ENCODE measurements at regions of chr11 and their contacts with region 1.

Region 1: DNA sequence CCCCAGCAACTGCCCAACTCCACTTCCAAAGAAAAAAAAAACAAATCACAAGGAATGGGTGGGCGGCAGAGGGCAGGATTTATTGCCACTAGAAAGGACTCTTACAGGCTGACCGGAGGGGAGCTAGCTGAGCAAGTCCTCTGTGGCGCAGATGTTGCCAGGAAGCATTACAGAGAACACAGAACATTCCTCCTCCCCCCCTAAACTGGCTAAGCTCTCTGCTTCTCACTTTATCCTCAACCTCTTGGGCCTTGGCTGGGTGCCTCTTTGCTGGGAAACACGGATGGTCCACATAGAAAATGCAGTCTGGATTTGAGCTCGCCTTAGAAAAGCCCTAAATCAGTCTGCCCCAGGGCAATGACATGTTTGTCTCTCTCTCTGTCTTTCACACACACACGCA is 12.5 kb upstream of the FJX1 start:
- DNase-seq: no peak
- H3K4me3 ChIP-seq: no peak overlapping the region
- H3K4me3 Mint-ChIP-seq: no peak overlapping the region
- H3K27ac ChIP-seq: no peak overlapping the region
- H3K27ac Mint-ChIP-seq: no peak overlapping the region
- H3K4me1 ChIP-seq: no peaks in the 10 kb centered on the region
- H3K4me1 Mint-ChIP-seq: no peaks in the 10 kb centered on the region
- H3K27me3 ChIP-seq: no peaks in the 10 kb centered on the region
- H3K27me3 Mint-ChIP-seq: peaks cover 11 to 71% of the 10 kb centered on the region in 2 donors

Region 2: DNA sequence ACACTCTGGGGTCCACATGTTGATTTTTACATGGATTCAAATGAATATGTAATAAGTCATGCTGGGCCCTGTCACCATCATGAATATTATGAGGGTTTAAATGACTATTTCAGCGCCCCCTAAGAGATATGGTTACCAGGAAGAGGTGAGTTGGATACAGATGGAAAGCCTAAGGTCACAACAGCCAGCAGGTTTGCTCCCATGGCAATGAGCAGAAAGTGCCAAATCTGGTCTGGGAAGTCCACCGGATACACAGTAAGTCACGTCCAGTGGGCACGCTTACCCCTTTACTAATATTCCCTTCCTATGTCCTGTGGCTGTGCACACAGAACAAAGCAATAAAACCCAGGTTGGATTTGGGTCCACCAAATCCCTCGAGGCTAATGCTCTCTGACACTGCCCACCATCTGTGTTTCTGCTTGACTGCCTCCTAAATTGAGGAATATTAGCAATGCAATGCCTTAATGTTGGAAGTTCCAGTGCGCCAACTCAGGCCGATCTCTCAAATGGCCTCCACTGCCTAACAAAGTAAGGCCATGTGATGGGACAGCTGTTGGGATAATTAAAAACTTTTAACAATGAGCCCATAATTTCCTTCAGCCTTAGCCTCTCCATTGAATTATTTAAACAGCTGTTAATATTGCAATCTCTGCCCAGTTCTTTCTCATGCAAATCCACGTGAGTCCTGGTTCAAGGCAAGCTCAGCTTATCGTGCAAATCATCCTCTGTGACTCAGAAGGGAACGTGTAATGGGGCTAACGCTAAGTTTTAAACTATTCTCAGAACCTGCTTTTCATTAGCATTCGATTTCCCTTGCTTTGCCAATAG is 284.0 kb before region 1 on chr11:
- CTCF ChIA-PET with region 1: no interaction called
- POLR2A ChIA-PET with region 1: no interaction called
- DNase-seq: no peak
- H3K4me3 ChIP-seq: no peak overlapping the region
- H3K4me3 Mint-ChIP-seq: no peak overlapping the region
- H3K27ac ChIP-seq: no peak overlapping the region
- H3K27ac Mint-ChIP-seq: no peak overlapping the region
- H3K4me1 ChIP-seq: peaks cover 16% of the 10 kb centered on the region
- H3K4me1 Mint-ChIP-seq: peaks cover 16 to 25% (median 17%) of the 10 kb centered on the region in 3 donors
- H3K27me3 ChIP-seq: no peaks in the 10 kb centered on the region
- H3K27me3 Mint-ChIP-seq: peaks cover 0 to 2% of the 10 kb centered on the region in 2 donors

Region 3: DNA sequence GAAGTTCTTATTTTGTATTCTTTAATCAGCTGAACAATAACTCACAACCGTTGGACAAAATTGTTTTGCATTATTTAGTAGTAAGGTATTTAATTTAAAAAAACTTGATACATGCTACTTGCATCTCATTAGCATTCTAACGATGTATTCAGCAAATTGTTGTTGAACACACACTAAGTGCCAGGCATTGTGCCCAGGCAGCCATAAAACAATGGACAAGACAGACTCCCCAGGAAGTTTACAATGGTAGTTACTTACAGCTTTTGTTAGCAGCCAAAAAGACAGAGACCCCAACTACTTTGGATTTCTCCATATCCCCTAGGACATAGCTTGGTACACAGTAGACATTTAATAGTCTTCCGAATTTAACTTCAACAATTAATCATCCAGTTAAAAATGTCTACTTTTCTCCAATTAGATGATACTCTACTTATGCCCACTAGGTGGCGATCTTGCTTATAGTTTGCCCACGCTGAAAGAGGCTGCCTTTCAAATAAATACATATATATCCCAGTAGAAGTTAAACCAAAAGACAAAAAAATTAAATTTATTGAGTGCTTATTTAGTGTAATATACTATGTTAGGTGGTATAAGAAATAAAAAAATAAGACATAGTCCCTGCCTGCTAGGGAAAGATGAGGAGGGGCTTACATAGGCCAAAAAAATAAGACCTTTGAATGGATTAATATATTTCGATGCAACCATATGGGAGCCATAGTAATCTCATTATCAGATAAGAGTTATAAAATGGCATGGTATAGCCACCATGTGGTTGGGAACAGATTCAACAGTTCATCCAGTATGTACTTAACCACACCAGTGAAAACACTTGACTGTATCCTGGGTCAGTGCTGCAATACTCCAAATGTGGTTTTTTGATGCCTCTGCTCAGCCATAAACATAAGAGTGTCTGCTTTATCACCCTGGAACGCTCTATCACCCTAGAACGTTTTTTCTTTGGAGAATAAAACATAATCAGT is 10.5 kb after region 1 on chr11:
- CTCF ChIA-PET with region 1: interaction called, 12 read pairs
- POLR2A ChIA-PET with region 1: no interaction called
- DNase-seq: peak in 2 of 5 donors; percentile 27 to 31
- H3K4me3 ChIP-seq: no peak overlapping the region
- H3K4me3 Mint-ChIP-seq: peak overlapping the region in 1 of 7 donors; percentile 38
- H3K27ac ChIP-seq: no peak overlapping the region
- H3K27ac Mint-ChIP-seq: no peak overlapping the region
- H3K4me1 ChIP-seq: peaks cover 12% of the 10 kb centered on the region
- H3K4me1 Mint-ChIP-seq: peaks cover 10 to 16% (median 11%) of the 10 kb centered on the region in 3 donors
- H3K27me3 ChIP-seq: peaks cover 15% of the 10 kb centered on the region
- H3K27me3 Mint-ChIP-seq: peaks cover 31 to 66% of the 10 kb centered on the region in 2 donors

Region 4: GRCh38 chr11:35785287-35786167 is 179.8 kb after region 1 on chr11:
- CTCF ChIA-PET with region 1: no interaction called
- POLR2A ChIA-PET with region 1: no interaction called
- DNase-seq: no peak
- H3K4me3 ChIP-seq: no peak overlapping the region
- H3K4me3 Mint-ChIP-seq: no peak overlapping the region
- H3K27ac ChIP-seq: no peak overlapping the region
- H3K27ac Mint-ChIP-seq: peak overlapping the region in 1 of 8 donors; percentile 10
- H3K4me1 ChIP-seq: peaks cover 18% of the 10 kb centered on the region
- H3K4me1 Mint-ChIP-seq: peaks cover 30 to 78% (median 60%) of the 10 kb centered on the region in 3 donors
- H3K27me3 ChIP-seq: no peaks in the 10 kb centered on the region
- H3K27me3 Mint-ChIP-seq: no peaks in the 10 kb centered on the region

Measured in CD8-positive, alpha-beta memory T cell (primary cell).